ENCODE measurements at regions of chr5 and their contacts with region 1.

Region 1: DNA sequence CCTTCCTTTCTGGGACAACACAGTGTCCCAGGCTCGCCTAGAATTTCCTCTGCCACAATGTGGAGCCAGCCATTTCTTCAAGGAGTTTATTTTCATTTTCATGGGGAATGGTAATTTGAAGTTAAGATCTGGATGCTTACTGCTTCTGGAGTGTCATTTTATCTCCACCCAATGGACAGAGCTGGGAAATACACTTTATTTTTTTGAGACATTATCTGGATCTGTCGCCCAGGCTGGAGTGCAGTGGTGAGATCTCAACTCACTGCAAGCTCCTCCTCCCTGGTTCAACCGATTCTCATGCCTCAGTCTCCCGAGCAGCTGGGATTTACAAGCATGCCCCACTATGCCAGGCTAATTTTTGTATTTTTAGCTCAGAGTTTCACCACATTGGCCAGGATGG is 12.7 kb upstream of the THG1L start:
- DNase-seq: peak; percentile 35
- ATAC-seq: peak; percentile 94
- H3K4me3 Mint-ChIP-seq: no peak overlapping the region
- H3K27ac Mint-ChIP-seq: no peak overlapping the region
- H3K4me1 Mint-ChIP-seq: peaks cover 24% of the 10 kb centered on the region
- H3K27me3 Mint-ChIP-seq: no peaks in the 10 kb centered on the region

Region 2: DNA sequence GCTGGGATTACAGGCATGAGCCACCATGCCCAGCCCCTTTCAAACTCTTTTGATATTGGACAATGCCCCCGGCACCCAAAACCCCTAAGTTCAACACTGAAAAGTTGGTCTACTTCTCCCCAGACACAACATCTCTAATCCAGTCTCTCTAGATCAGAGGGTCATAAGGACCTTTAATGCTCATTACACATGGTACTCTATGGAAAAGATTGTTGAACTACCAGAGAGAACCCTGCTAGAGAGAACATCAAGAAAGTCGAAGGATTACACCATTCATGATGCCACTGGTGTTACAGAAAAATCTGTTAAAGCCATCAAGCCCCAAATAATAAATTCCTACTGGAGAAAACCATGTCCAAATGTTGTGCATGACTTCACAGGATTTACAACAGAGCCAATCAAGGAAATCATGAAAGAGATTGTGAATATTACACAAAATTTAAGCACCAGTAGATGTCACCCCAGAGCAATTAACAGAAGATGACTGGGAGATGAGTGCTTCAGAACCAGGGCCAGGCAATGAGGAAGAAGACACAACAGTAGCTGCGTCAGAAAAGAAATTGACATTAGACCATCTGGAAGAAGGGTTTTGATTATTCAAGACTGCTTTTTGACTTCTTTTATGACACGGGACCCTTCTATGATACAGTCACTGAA is 286.8 kb before region 1 on chr5:
- CTCF ChIA-PET with region 1: interaction called, 13 read pairs
- POLR2A ChIA-PET with region 1: no interaction called
- intact Hi-C with region 1: loop called (anchors 1 kb)
- DNase-seq: peak; percentile 53
- ATAC-seq: peak; percentile 99
- H3K4me3 Mint-ChIP-seq: no peak overlapping the region
- H3K27ac Mint-ChIP-seq: no peak overlapping the region
- H3K4me1 Mint-ChIP-seq: peaks cover 5% of the 10 kb centered on the region
- H3K27me3 Mint-ChIP-seq: peaks cover 2% of the 10 kb centered on the region

Region 3: GRCh38 chr5:157665467-157666100 is 52.9 kb before region 1 on chr5:
- CTCF ChIA-PET with region 1: interaction called, 30 read pairs
- POLR2A ChIA-PET with region 1: no interaction called
- intact Hi-C with region 1: loop called (anchors 2 to 5 kb)
- DNase-seq: no peak
- ATAC-seq: no peak
- H3K4me3 Mint-ChIP-seq: no peak overlapping the region
- H3K27ac Mint-ChIP-seq: no peak overlapping the region
- H3K4me1 Mint-ChIP-seq: peaks cover 10% of the 10 kb centered on the region
- H3K27me3 Mint-ChIP-seq: peaks cover 4% of the 10 kb centered on the region

Region 4: GRCh38 chr5:157670662-157671591 is 47.6 kb before region 1 on chr5 and contains the start of gene C5orf52:
- CTCF ChIA-PET with region 1: interaction called, 30 read pairs
- POLR2A ChIA-PET with region 1: no interaction called
- intact Hi-C with region 1: loop called (anchors 2 to 5 kb)
- DNase-seq: peak; percentile 47
- ATAC-seq: peak; percentile 43
- H3K4me3 Mint-ChIP-seq: peak within 1 kb of the TSS; percentile 81
- H3K27ac Mint-ChIP-seq: peak within 1 kb of the TSS; percentile 83
- H3K4me1 Mint-ChIP-seq: peaks cover 23% of the 10 kb centered on the region
- H3K27me3 Mint-ChIP-seq: peaks cover 16% of the 10 kb centered on the region
- total RNA-seq, gene C5orf52: not detected

Region 5: GRCh38 chr5:157731272-157732129 is 13.0 kb after region 1 on chr5 and contains the start of gene THG1L:
- CTCF ChIA-PET with region 1: interaction called, 12 read pairs
- POLR2A ChIA-PET with region 1: no interaction called
- intact Hi-C with region 1: no loop called
- DNase-seq: peak; percentile 99
- ATAC-seq: peak; percentile 95
- H3K4me3 Mint-ChIP-seq: peak within 1 kb of the TSS; percentile 86
- H3K27ac Mint-ChIP-seq: peak within 1 kb of the TSS; percentile 96
- H3K4me1 Mint-ChIP-seq: peaks cover 27% of the 10 kb centered on the region
- H3K27me3 Mint-ChIP-seq: no peaks in the 10 kb centered on the region
- total RNA-seq, gene THG1L: 29.9 to 33.8 TPM